ENCODE measurements at regions of chr15 and their contacts with region 1.

Region 1: GRCh38 chr15:85443593-85444087 is 63.2 kb downstream of the AKAP13 start:
- DNase-seq: peak; percentile 68
- H3K4me3 Mint-ChIP-seq: no peak overlapping the region
- H3K27ac Mint-ChIP-seq: peak overlapping the region; percentile 84
- H3K4me1 Mint-ChIP-seq: peaks cover 38% of the 10 kb centered on the region
- H3K27me3 Mint-ChIP-seq: no peaks in the 10 kb centered on the region
- CTCF ChIP-seq: peak; percentile 13

Region 2: DNA sequence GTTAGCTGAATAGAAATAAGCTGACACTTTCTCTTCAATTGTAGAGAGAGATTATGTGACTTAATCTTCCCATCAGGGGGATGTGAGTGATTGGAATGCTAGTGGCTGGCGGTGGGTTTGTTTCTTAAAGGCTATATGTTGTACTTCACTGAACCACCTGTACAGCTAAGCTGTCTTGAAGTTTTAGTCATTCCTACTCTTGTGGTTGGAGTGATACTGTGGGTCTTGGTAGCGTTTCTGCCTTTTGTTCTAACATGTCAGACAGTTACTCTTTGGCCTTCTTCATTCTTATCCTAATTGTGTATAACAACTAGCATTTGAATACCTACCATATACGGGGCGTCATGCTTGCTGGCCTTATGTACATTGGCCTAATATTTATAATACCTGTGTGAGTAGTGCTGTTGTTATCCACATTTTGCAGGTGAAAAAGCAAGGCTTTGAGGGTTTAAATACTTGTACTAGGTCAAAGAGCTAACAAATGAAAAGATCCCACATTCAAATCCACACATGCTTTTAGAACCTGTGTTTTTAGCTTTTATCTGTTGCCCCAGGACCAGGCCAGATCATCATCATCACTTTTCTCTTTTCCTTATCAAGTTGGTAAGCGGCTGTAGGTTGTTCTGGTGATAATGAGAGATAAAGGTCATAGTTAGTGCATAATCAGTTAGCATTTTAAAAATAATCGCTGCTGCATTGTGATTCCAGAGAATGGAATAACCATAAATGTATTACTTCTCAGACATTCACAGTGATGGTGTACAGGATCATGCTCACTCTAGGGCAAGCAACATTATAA is 13.0 kb before region 1 on chr15:
- CTCF ChIA-PET with region 1: interaction called, 3 read pairs
- POLR2A ChIA-PET with region 1: interaction called, 12 read pairs
- intact Hi-C with region 1: no loop called
- DNase-seq: no peak
- H3K4me3 Mint-ChIP-seq: no peak overlapping the region
- H3K27ac Mint-ChIP-seq: no peak overlapping the region
- H3K4me1 Mint-ChIP-seq: peaks cover 7% of the 10 kb centered on the region
- H3K27me3 Mint-ChIP-seq: no peaks in the 10 kb centered on the region
- CTCF ChIP-seq: no peak

Region 3: DNA sequence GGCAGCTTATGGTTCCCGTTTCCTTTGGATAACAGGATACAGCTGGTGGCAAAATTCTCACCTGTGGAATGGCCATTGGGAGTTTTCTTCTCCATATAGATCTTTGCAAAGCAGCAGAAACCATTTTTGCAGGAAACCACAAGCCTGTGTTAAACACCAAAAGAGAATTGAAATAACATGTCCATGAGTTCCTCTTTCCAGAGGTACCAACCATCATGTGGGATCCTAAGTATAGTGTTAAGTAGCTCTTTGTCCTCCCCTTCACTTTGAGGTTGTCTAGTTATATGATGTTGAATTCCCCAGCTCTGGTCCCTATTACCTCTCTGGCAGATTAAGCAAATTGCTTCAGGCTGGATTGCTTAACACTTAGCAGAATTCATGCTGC is 31.7 kb after region 1 on chr15:
- CTCF ChIA-PET with region 1: interaction called, 3 read pairs
- POLR2A ChIA-PET with region 1: interaction called, 4 read pairs
- intact Hi-C with region 1: loop called (anchors 2 kb)
- DNase-seq: no peak
- H3K4me3 Mint-ChIP-seq: no peak overlapping the region
- H3K27ac Mint-ChIP-seq: peak overlapping the region; percentile 7
- H3K4me1 Mint-ChIP-seq: peaks cover 55% of the 10 kb centered on the region
- H3K27me3 Mint-ChIP-seq: no peaks in the 10 kb centered on the region
- CTCF ChIP-seq: no peak

Region 4: DNA sequence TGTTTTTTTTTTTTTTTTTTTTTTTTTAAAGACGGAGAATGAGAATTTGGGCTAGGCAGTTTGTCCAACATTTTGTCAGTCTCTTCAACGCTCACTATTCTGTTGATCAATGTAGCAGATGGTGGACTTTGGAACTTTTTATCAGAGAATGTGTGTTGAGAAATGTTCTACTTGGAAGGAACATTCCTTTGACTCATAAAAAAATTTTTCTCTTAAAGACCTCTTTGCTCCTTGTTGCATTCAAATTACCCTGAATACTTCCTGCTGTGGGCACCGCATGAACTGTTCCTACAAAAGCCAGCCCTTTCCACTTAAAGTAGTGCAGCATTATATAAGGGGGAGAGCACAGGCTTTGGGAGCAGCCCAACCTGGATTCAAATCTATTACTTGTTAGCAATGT is 119.7 kb after region 1 on chr15:
- CTCF ChIA-PET with region 1: no interaction called
- POLR2A ChIA-PET with region 1: no interaction called
- intact Hi-C with region 1: no loop called
- DNase-seq: no peak
- H3K4me3 Mint-ChIP-seq: no peak overlapping the region
- H3K27ac Mint-ChIP-seq: no peak overlapping the region
- H3K4me1 Mint-ChIP-seq: peaks cover 21% of the 10 kb centered on the region
- H3K27me3 Mint-ChIP-seq: no peaks in the 10 kb centered on the region
- CTCF ChIP-seq: no peak

Measured in MCF 10A (cell line).